Activated CD4-positive, alpha-beta memory T cell treated with anti-CD3 and anti-CD28 coated beads, Interleukin-2, amount 10 ng/mL, durations not matched to agents 7 days and 5 days (primary cell): ENCODE measurements at regions of chr6 and their contacts with region 1.

Region 1: DNA sequence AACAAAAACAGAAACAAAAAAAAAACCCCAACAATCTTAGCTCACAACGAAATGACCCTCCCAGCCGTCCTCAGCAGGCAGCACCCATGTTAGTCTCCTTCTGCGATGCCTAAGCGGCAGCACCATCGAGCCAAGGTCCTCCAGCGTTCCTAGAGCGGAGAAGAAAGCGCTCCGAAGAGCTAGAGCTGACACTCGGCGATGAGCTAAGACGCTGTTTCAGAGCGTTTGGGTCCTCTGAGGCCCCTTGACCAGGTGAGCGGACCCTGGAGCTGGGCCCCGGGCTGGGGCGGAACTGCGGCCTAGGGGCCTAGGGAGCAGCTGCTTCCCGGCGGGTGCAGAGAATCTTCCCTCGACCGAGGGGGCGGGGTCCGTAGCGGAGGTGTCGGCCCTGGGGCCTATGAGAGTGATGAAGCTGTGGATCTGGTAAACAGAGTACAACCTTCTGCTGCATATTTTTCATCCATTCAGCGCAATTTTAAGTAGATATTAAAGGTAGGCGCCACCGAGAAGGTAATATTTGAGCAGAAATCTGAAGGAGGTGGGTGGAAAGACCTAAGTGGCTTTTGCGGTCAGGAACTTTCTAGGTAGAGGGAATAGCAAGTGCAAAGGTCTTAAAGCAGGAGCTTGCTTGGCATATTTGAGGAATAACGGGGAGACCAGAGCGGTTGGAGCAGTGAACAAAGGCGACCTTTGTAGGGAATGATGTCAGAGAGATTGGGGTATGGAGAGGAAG is at the start of gene ZSCAN26:
- DNase-seq: peak; percentile 87
- H3K4me3 Mint-ChIP-seq: no peak within 1 kb of the TSS
- H3K27ac Mint-ChIP-seq: no peak within 1 kb of the TSS
- H3K4me1 Mint-ChIP-seq: peaks cover 23% of the 10 kb centered on the region
- H3K27me3 Mint-ChIP-seq: peaks cover 7% of the 10 kb centered on the region
- total RNA-seq, gene ZSCAN26: 9.9 to 10.2 TPM

Region 2: DNA sequence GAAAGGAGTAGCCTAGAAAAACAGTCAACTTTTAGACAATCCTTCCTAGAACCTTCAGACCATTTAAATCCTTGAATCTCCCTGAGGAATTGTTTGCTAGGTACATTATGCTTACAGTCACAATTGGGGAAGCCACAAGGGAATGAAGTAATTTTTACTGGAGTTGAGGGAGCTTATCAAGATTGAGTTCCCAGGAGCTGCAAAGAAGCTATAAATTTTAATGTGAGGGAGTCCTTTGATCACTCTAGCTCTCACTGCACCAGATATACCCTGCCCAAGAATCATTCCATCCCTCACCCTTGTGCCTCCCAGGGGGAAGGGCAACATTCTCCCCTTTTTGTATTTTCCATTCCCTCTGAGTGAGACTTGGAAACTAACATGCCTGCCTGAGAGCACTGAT is 199.1 kb before region 1 on chr6:
- CTCF ChIA-PET with region 1: no interaction called
- POLR2A ChIA-PET with region 1: no interaction called
- DNase-seq: no peak
- H3K4me3 Mint-ChIP-seq: no peak overlapping the region
- H3K27ac Mint-ChIP-seq: no peak overlapping the region
- H3K4me1 Mint-ChIP-seq: no peaks in the 10 kb centered on the region
- H3K27me3 Mint-ChIP-seq: peaks cover 24% of the 10 kb centered on the region

Region 3: DNA sequence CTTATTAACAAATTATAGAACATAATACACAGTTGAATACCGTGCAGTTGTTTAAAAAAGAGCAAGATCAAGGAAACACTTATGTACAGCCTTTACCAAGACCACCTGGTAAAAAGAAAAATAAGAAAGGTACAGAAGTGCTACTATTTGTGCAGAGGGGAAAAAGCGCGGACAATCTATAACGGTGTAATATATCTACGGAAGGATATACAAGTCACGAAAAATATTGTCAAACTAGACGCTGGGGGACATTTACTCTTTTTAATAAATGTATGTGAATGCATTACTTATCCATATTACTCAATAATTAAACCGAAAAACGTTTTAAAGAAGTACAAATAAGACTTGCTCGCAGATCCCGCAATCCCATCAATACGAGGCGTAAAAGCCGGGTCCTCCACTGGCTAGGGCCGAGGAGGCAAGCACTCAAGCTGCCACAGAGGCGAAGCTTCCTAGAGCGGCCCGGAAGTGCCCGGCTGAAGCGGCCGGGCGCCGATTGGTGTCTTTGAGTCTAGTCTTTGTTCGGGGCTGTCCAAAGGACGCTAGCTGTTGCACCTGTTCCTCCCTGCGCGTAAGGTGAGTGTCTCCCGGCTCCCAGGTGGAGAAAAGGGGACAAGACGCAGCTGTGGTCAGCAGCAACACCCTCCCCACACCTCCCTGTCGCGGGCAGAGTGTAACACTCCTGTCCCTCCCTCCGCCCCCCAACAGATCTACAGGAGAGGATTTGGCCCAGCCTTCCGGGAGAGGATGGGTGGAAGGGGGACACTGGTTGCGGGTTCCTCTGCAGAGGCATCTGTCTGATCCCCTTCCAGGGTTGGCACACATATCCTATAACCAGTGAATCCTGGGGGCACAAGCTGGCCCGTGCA is 142.8 kb before region 1 on chr6 and contains the start of gene ZSCAN16:
- CTCF ChIA-PET with region 1: interaction called, 3 read pairs
- POLR2A ChIA-PET with region 1: interaction called, 10 read pairs
- DNase-seq: peak; percentile 77
- H3K4me3 Mint-ChIP-seq: peak within 1 kb of the TSS; percentile 89
- H3K27ac Mint-ChIP-seq: peak within 1 kb of the TSS; percentile 78
- H3K4me1 Mint-ChIP-seq: peaks cover 45% of the 10 kb centered on the region
- H3K27me3 Mint-ChIP-seq: no peaks in the 10 kb centered on the region
- total RNA-seq, gene ZSCAN16: 5.3 TPM

Region 4: DNA sequence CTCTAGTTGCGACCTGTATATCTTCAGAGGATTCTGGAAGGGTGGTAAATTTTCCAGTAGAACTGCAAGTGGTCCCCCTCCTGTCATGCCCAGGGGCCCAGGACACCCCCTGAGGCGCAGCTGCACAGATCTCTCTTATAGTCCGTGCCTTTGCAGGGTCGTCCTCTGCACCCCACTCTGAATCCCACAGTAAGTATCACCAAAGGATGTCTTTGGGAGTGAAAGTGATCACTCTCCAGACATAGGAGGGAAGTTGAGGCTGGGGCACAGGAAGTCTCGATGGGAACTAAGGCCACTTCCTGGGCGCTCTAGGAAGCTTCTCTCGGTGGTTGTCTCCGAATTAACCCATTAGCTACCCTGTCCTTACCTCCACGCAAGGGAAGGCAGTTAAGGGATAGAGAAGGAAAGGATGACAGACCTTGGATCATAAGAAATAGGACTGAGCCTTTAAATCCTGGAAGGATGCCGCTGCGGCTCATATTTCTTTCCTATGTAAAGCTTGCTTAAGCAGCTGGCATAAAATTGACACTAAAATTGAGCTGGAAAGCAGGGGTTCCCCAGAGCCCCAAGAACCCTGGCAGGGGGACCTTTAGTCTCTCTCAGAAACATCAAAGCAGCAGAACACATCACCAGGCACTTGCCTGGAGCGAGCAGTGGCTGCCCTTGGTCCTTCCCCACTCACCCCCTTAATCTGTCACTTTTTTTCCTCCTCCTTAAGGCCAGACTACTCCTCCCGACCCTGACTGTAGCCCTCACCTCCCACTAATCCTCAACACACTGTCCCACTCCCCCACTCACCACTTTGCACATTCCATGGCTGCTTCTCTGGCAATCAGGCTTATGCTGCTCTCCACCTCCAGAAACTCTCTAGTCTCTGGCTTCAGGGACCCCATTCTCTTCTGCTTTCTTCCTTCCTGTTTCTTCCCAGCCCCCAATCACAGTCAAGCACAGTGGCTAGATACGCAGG is 14.8 kb before region 1 on chr6 and contains the start of gene ZKSCAN4:
- CTCF ChIA-PET with region 1: interaction called, 12 read pairs
- POLR2A ChIA-PET with region 1: interaction called, 26 read pairs
- DNase-seq: peak; percentile 76
- H3K4me3 Mint-ChIP-seq: peak within 1 kb of the TSS; percentile 98
- H3K27ac Mint-ChIP-seq: peak within 1 kb of the TSS; percentile 78
- H3K4me1 Mint-ChIP-seq: peaks cover 29% of the 10 kb centered on the region
- H3K27me3 Mint-ChIP-seq: no peaks in the 10 kb centered on the region
- total RNA-seq, gene ZKSCAN4: 6.3 to 6.6 TPM

Region 5: DNA sequence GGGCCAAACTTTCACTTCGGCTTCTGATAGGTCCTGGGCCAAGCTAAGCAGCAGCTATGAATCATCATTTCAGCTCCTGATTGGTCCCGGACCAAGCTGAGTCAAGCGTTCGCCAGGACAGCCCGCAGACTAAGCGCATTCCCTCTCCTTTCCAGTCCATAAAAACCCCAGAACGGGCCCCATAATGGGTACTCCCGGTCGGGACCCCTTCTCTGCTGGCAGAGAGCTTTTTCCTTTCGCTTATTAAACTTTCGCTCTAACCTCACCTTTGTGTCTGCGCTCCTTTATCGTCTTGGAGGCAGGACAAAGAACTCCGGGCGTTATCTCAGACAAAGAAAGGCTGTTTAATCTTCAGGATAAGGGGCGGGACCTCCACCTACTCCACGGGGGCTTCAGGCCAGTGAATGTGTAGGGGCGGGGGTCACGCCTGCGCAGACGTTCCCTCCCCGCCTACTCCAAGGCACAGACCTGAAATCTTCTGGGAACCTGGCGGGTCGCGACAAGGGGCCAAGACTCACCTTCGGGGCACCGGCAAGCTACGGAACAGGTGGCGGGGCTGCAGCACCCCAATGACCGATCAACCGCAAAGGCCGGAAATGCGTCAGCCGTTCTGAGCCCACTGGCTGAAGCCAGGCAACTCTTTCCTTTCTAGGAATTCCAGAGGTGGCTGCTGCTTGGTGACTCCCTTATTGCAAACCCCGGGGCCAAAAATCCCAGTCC is 68.6 kb after region 1 on chr6 and contains the start of gene ZSCAN31:
- CTCF ChIA-PET with region 1: no interaction called
- POLR2A ChIA-PET with region 1: interaction called, 11 read pairs
- DNase-seq: peak; percentile 76
- H3K4me3 Mint-ChIP-seq: no peak within 1 kb of the TSS
- H3K27ac Mint-ChIP-seq: no peak within 1 kb of the TSS
- H3K4me1 Mint-ChIP-seq: no peaks in the 10 kb centered on the region
- H3K27me3 Mint-ChIP-seq: peaks cover 1% of the 10 kb centered on the region
- total RNA-seq, gene ZSCAN31: 0.88 to 1.0 TPM

Region 6: DNA sequence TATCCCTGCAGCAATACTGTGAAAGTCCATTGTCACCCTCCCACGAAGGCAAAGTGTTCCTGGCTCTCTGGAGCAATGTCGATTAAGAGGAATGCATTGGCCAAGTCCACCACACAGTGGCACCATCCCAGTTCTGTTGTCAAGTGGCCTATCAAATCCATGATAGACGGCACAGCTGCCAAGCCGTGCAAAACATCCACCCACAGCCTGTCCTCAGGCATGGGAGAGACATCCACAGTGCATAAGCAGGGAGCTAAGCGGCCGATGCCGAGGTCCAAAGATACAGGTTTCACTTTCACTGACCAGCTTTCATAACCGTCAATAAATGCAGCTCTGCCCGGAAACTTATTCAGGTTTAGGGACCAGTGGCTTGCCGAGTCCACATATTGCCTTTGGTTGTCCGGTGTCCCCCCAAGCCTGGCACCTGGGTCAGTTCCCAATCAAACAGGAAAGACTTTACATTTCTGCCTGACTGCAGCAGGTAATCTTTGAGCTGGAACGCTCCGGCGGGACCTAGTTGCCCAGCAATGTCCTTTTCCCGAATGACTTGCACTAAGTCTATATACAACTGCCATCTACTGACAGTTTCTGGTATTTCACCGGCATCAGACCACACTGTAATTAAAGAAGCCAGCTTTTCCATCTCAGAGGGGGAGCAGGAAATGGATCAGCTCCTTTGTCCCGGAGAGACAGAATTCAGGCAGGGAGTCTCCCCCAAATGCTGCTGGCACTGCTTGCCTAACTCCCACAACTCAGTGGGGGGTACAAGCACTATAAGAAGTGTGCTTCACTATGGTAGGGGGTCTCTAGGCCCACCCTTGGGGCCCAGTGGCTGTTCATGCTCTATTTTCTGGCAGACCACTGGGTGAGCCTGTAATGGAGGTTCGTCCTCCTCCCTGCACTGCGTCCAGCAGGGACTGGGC is 88.9 kb after region 1 on chr6:
- CTCF ChIA-PET with region 1: interaction called, 13 read pairs
- POLR2A ChIA-PET with region 1: interaction called, 16 read pairs
- DNase-seq: peak; percentile 61
- H3K4me3 Mint-ChIP-seq: peak overlapping the region; percentile 81
- H3K27ac Mint-ChIP-seq: peak overlapping the region; percentile 71
- H3K4me1 Mint-ChIP-seq: peaks cover 25% of the 10 kb centered on the region
- H3K27me3 Mint-ChIP-seq: no peaks in the 10 kb centered on the region